Caco-2 (cell line): ENCODE measurements at regions of chr7 and their contacts with region 1.

Region 1: GRCh38 chr7:116588641-116589594 is 64.1 kb downstream of the CAV1 start:
- DNase-seq: peak in 1 of 2 experiments; percentile 57
- H3K4me3 ChIP-seq: no peak overlapping the region
- H3K4me3 Mint-ChIP-seq: no peak overlapping the region
- H3K27ac Mint-ChIP-seq: peak overlapping the region; percentile 30
- H3K4me1 ChIP-seq: peaks cover 17% of the 10 kb centered on the region; the same call in 1 of the 2 replicates
- H3K4me1 Mint-ChIP-seq: peaks cover 22% of the 10 kb centered on the region
- H3K27me3 ChIP-seq: no peaks in the 10 kb centered on the region
- H3K27me3 Mint-ChIP-seq: no peaks in the 10 kb centered on the region
- CTCF ChIP-seq: peak; percentile 44 to 69

Region 2: GRCh38 chr7:116180302-116180701 is 408.6 kb before region 1 on chr7:
- CTCF ChIA-PET with region 1: interaction called, 22 read pairs
- POLR2A ChIA-PET with region 1: no interaction called
- intact Hi-C with region 1: loop called (anchors 1 kb)
- DNase-seq: peak; percentile 47 to 58
- H3K4me3 ChIP-seq: no peak overlapping the region
- H3K4me3 Mint-ChIP-seq: no peak overlapping the region
- H3K27ac Mint-ChIP-seq: no peak overlapping the region
- H3K4me1 ChIP-seq: no peaks in the 10 kb centered on the region
- H3K4me1 Mint-ChIP-seq: no peaks in the 10 kb centered on the region
- H3K27me3 ChIP-seq: no peaks in the 10 kb centered on the region
- H3K27me3 Mint-ChIP-seq: no peaks in the 10 kb centered on the region
- CTCF ChIP-seq: peak; percentile 73 to 80

Region 3: GRCh38 chr7:116438267-116438666 is 150.7 kb before region 1 on chr7:
- CTCF ChIA-PET with region 1: interaction called, 21 read pairs
- POLR2A ChIA-PET with region 1: interaction called, 3 read pairs
- intact Hi-C with region 1: loop called (anchors 1 kb)
- DNase-seq: peak; percentile 42 to 47
- H3K4me3 ChIP-seq: no peak overlapping the region
- H3K4me3 Mint-ChIP-seq: no peak overlapping the region
- H3K27ac Mint-ChIP-seq: no peak overlapping the region
- H3K4me1 ChIP-seq: peaks cover 24% of the 10 kb centered on the region
- H3K4me1 Mint-ChIP-seq: peaks cover 4% of the 10 kb centered on the region
- H3K27me3 ChIP-seq: no peaks in the 10 kb centered on the region
- H3K27me3 Mint-ChIP-seq: no peaks in the 10 kb centered on the region
- CTCF ChIP-seq: peak; percentile 19 to 41

Region 4: GRCh38 chr7:116534790-116535189 is 54.1 kb before region 1 on chr7:
- CTCF ChIA-PET with region 1: no interaction called
- POLR2A ChIA-PET with region 1: no interaction called
- intact Hi-C with region 1: loop called (anchors 2 kb)
- DNase-seq: no peak
- H3K4me3 ChIP-seq: no peak overlapping the region
- H3K4me3 Mint-ChIP-seq: no peak overlapping the region
- H3K27ac Mint-ChIP-seq: no peak overlapping the region
- H3K4me1 ChIP-seq: peaks cover 9% of the 10 kb centered on the region
- H3K4me1 Mint-ChIP-seq: peaks cover 6% of the 10 kb centered on the region
- H3K27me3 ChIP-seq: no peaks in the 10 kb centered on the region
- H3K27me3 Mint-ChIP-seq: no peaks in the 10 kb centered on the region
- CTCF ChIP-seq: no peak

Region 5: GRCh38 chr7:116661865-116662264 is 72.9 kb after region 1 on chr7:
- CTCF ChIA-PET with region 1: no interaction called
- POLR2A ChIA-PET with region 1: no interaction called
- intact Hi-C with region 1: no loop called
- DNase-seq: no peak
- H3K4me3 ChIP-seq: no peak overlapping the region
- H3K4me3 Mint-ChIP-seq: no peak overlapping the region
- H3K27ac Mint-ChIP-seq: no peak overlapping the region
- H3K4me1 ChIP-seq: peaks cover under 1% of the 10 kb centered on the region; the same call in 1 of the 2 replicates
- H3K4me1 Mint-ChIP-seq: no peaks in the 10 kb centered on the region
- H3K27me3 ChIP-seq: no peaks in the 10 kb centered on the region
- H3K27me3 Mint-ChIP-seq: no peaks in the 10 kb centered on the region
- CTCF ChIP-seq: no peak

Region 6: DNA sequence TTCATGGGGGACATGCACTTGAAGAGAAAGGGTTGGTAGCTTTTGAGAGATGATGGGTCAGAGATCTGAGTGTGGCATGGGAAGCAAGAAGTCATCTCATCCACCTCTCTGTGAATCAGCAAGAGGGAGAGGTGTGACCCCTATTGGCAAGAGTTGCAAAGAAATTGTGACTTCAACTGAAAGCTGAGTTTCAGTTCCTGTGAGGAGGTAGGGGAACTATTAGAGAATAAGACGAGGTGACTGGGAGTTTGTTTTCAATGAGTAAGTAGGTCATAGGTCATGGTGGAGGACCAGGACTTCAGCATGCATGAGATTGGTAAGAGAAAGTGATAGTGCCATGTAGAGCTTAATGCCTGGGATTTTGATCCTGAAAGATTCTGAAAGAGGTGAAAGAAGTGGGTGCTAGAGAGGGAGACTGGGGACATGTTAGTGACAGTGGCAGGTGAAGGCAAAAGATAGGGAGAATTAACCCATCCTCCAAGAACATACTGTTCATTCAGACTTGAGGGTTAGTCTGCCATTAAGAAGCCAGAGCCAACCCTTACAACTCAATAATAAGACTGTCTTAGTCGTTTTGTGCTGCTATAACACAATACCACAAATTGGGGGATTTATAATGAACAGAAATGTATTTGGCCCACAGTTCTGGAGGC is 198.0 kb after region 1 on chr7:
- CTCF ChIA-PET with region 1: interaction called, 6 read pairs
- POLR2A ChIA-PET with region 1: no interaction called
- intact Hi-C with region 1: loop called (anchors 5 kb)
- DNase-seq: peak in 1 of 2 experiments; percentile 42
- H3K4me3 ChIP-seq: no peak overlapping the region
- H3K4me3 Mint-ChIP-seq: no peak overlapping the region
- H3K27ac Mint-ChIP-seq: no peak overlapping the region
- H3K4me1 ChIP-seq: peaks cover 28% of the 10 kb centered on the region
- H3K4me1 Mint-ChIP-seq: peaks cover 6% of the 10 kb centered on the region
- H3K27me3 ChIP-seq: no peaks in the 10 kb centered on the region
- H3K27me3 Mint-ChIP-seq: no peaks in the 10 kb centered on the region
- CTCF ChIP-seq: peak; percentile 38 to 51